Mammary epithelial cell (primary cell): ENCODE measurements at regions of chr11 and their contacts with region 1.

Region 1: DNA sequence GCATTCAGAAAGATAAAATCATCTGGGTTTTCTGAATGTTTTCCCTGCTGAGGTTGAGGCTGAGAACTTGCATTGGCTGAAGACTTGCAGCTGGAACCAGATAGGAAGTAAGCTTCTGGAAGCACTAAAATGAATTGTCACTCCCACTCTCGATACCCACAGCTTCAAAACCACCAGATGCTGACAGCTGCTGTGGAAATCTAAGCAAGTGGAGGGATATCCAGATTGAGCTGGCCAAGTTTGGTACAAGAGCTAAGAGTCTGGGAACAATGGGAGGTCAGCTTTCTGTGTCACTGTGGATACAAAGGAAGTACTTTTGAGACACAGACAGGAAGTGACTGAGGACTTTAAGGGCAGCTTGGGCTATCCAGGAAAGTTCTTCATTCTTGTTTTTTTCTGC is 51.3 kb upstream of the CD44 start:
- DNase-seq: no peak
- H3K4me3 ChIP-seq: no peak overlapping the region
- H3K27ac ChIP-seq: peak overlapping the region; percentile 87
- H3K4me1 ChIP-seq: peaks cover 49% of the 10 kb centered on the region
- H3K27me3 ChIP-seq: no peaks in the 10 kb centered on the region
- CTCF ChIP-seq: no peak

Region 2: DNA sequence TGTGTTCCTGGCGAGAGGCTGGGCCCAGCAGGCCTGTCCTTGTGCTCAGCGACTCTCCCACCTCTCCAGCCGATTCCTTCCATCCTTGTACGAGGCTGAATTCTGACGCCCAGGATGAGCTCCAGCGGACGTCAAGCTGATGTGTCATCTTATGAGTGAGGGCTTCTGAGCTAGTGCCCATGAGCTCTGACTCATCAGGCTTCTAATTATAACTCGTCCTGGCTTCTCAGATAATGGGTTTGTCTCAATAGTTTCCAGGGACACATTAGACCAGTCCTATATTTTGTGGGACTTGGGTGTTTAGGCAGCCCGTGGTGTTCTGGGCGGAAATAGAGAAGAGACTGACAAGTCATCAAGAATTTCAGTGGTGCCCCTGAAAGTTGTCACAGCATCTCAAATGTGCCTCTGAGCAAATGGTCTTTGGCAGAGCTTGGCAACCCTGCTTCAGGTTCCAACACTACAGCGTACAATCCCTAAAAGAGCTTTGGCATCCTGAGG is 56.9 kb before region 1 on chr11:
- CTCF ChIA-PET with region 1: interaction called, 4 read pairs
- dilution Hi-C with region 1: loop called (anchors 5 kb)
- in situ Hi-C with region 1: no loop called
- intact Hi-C with region 1: loop called (anchors 2 kb)
- DNase-seq: peak; percentile 97
- H3K4me3 ChIP-seq: peak overlapping the region in 1 of 3 experiments; percentile 4
- H3K27ac ChIP-seq: peak overlapping the region; percentile 97
- H3K4me1 ChIP-seq: peaks cover 45% of the 10 kb centered on the region
- H3K27me3 ChIP-seq: no peaks in the 10 kb centered on the region
- CTCF ChIP-seq: no peak

Region 3: DNA sequence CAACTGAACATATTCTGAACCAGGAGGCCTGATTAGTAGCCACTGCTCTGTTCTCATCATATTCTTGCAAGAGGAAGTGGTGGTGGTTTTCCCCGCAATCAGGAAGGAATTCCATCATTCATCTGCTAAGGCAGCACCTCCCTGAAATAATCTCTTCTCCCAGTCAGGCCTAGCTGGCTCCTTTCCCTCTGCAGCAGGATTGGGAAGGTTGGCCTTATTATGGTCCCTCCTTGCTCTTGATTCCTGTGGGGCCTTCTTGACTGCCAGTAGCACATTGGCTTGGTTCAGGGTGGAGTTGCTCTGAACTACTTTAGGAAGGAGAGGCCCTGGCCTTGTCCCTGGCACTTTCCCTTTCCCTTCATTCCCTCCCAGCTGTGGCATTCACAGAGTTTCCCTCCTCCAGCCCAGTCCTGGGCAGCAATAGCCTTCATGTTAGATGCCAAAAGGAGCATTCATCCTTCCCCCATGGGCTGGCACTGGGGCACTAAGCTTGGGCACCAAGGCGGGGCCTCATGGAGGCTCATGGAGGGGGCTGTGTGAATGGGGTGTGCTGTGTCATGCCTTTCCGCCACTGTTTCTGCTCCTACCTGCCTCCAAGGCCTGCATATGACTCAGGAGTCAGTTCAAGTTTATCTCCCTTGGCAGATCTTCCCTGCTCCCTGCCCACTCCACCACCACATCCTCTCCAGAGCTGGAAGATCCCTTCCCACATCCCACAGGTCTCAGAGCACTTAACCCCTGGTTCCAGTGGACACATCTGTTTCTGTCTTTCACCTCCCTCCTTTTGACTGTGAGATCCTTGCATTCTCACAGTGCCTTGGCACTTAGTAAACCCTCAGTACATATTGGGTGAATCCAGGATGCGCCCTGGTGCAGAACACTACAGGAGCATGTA is 23.8 kb after region 1 on chr11:
- CTCF ChIA-PET with region 1: no interaction called
- dilution Hi-C with region 1: no loop called
- in situ Hi-C with region 1: no loop called
- intact Hi-C with region 1: loop called (anchors 1 kb)
- DNase-seq: peak; percentile 99
- H3K4me3 ChIP-seq: peak overlapping the region in 1 of 3 experiments; percentile 17
- H3K27ac ChIP-seq: peak overlapping the region; percentile 94
- H3K4me1 ChIP-seq: peaks cover 70% of the 10 kb centered on the region
- H3K27me3 ChIP-seq: no peaks in the 10 kb centered on the region
- CTCF ChIP-seq: no peak

Region 4: DNA sequence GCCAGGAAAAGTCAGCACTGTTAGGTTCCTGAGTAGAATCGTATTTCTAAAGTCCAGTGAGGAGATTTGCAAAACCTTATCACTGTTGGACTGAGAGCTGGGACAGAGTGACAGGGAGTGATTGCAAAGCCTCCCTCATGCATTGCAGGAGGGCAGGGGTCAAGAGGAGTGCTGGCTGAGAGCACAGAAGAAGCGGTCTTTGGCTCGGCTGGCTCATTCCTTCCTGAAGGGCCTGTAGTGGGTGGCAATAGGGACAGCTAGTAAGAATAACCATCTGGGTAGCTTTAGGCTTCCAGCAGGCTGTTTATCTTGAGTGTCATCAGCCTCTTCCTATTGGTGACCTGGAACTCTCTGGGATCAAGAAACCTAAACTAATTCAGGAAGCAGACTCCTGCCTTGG is 104.7 kb after region 1 on chr11:
- CTCF ChIA-PET with region 1: no interaction called
- dilution Hi-C with region 1: no loop called
- in situ Hi-C with region 1: no loop called
- intact Hi-C with region 1: no loop called
- DNase-seq: no peak
- H3K4me3 ChIP-seq: no peak overlapping the region
- H3K27ac ChIP-seq: no peak overlapping the region
- H3K4me1 ChIP-seq: no peaks in the 10 kb centered on the region
- H3K27me3 ChIP-seq: no peaks in the 10 kb centered on the region
- CTCF ChIP-seq: no peak